ENCODE measurements at regions of chr7 and their contacts with region 1.

Region 1: DNA sequence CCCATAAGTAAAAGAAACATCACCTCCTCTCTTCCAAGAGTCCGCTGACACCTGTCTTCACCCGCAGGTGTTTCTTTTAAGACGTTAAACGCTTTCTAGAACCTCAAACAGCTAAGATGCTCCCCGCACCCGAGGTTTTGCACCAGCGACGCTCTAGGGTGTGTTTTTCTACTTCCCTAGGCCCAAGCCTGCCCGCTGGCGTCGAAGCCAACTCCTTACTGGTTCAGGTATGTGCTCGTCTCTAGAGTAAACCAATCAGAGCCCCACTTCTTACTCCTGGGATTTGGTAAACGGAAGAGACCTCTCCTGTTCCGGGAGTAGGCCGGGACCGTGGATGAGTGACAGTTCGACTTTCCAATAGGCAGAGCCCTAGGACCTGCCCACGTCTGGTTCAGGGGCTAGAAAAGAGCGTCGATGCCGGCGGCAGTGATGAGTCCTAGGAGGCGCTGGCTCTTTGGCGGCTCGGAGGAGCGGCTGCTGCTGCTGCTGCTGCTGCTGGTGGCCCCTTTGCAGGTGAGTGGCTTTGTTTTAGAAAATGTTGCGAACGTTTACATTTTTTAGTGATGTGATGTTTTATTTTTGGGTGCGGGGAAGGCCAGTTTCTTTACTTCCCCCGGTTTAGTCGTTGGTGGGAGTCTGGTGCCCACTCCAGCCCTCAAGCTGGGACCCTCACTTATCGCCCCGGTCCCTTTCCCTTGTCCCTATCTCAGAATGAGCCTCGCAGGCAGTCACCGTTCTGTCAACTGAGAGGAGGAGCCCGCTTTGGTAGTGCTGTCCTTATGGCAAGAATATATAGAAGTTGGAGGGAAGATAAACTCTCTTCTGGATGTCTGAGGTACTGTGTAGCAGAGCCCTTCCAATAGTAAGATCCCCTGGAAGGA is at the start of gene BPGM:
- DNase-seq: peak; percentile 81 to 100 (median 98)
- ATAC-seq: peak; percentile 97
- H3K4me3 ChIP-seq: peak within 1 kb of the TSS; percentile 88
- H3K4me3 Mint-ChIP-seq: no peak within 1 kb of the TSS
- H3K27ac ChIP-seq: peak within 1 kb of the TSS; percentile 85
- H3K27ac Mint-ChIP-seq: no peak within 1 kb of the TSS
- H3K4me1 ChIP-seq: peaks cover 19 to 35% of the 10 kb centered on the region in 2 donors
- H3K4me1 Mint-ChIP-seq: peaks cover 21 to 45% (median 38%) of the 10 kb centered on the region in 7 donors
- H3K27me3 ChIP-seq: no peaks in the 10 kb centered on the region
- H3K27me3 Mint-ChIP-seq: no peaks in the 10 kb centered on the region
- total RNA-seq, gene BPGM: 12.7 to 19.2 (median 14.2) TPM

Region 2: GRCh38 chr7:133252858-133253518 is 1393.7 kb before region 1 on chr7 and contains the start of gene EXOC4:
- CTCF ChIA-PET with region 1: no interaction called
- POLR2A ChIA-PET with region 1: no interaction called
- intact Hi-C with region 1: loop called (anchors 2 kb)
- DNase-seq: peak; percentile 66 to 97 (median 95)
- ATAC-seq: peak; percentile 100
- H3K4me3 ChIP-seq: peak within 1 kb of the TSS; percentile 87
- H3K4me3 Mint-ChIP-seq: peak within 1 kb of the TSS; percentile 85 to 99 (median 96)
- H3K27ac ChIP-seq: peak within 1 kb of the TSS; percentile 93
- H3K27ac Mint-ChIP-seq: peak within 1 kb of the TSS; percentile 94 to 98 (median 96)
- H3K4me1 ChIP-seq: peaks cover 4 to 7% of the 10 kb centered on the region in 2 donors
- H3K4me1 Mint-ChIP-seq: peaks cover 22 to 45% (median 40%) of the 10 kb centered on the region in 7 donors
- H3K27me3 ChIP-seq: no peaks in the 10 kb centered on the region
- H3K27me3 Mint-ChIP-seq: peaks cover 0 to 9% (median 0%) of the 10 kb centered on the region in 5 donors
- total RNA-seq, gene EXOC4: 65.4 to 106 (median 82.9) TPM

Region 3: GRCh38 chr7:134458806-134459698 is 187.6 kb before region 1 on chr7 and contains the start of gene AKR1B1:
- CTCF ChIA-PET with region 1: no interaction called
- POLR2A ChIA-PET with region 1: no interaction called
- intact Hi-C with region 1: loop called (anchors 1 kb)
- DNase-seq: peak; percentile 76 to 88 (median 84)
- ATAC-seq: peak; percentile 94
- H3K4me3 ChIP-seq: peak within 1 kb of the TSS; percentile 78
- H3K4me3 Mint-ChIP-seq: peak within 1 kb of the TSS; percentile 71 to 94 (median 89)
- H3K27ac ChIP-seq: peak within 1 kb of the TSS; percentile 72
- H3K27ac Mint-ChIP-seq: peak within 1 kb of the TSS; percentile 80 to 92 (median 84)
- H3K4me1 ChIP-seq: peaks cover 20 to 30% of the 10 kb centered on the region in 2 donors
- H3K4me1 Mint-ChIP-seq: peaks cover 30 to 55% (median 48%) of the 10 kb centered on the region in 7 donors
- H3K27me3 ChIP-seq: no peaks in the 10 kb centered on the region
- H3K27me3 Mint-ChIP-seq: no peaks in the 10 kb centered on the region
- total RNA-seq, gene AKR1B1: 62.2 to 108 (median 100) TPM

Region 4: GRCh38 chr7:134619627-134620331 is 26.9 kb before region 1 on chr7:
- CTCF ChIA-PET with region 1: no interaction called
- POLR2A ChIA-PET with region 1: no interaction called
- intact Hi-C with region 1: no loop called
- DNase-seq: no peak
- ATAC-seq: no peak
- H3K4me3 ChIP-seq: no peak overlapping the region
- H3K4me3 Mint-ChIP-seq: no peak overlapping the region
- H3K27ac ChIP-seq: no peak overlapping the region
- H3K27ac Mint-ChIP-seq: no peak overlapping the region
- H3K4me1 ChIP-seq: no peaks in the 10 kb centered on the region
- H3K4me1 Mint-ChIP-seq: no peaks in the 10 kb centered on the region
- H3K27me3 ChIP-seq: peaks cover 0 to 4% of the 10 kb centered on the region in 2 donors
- H3K27me3 Mint-ChIP-seq: peaks cover 12 to 40% (median 38%) of the 10 kb centered on the region in 5 donors

Region 5: DNA sequence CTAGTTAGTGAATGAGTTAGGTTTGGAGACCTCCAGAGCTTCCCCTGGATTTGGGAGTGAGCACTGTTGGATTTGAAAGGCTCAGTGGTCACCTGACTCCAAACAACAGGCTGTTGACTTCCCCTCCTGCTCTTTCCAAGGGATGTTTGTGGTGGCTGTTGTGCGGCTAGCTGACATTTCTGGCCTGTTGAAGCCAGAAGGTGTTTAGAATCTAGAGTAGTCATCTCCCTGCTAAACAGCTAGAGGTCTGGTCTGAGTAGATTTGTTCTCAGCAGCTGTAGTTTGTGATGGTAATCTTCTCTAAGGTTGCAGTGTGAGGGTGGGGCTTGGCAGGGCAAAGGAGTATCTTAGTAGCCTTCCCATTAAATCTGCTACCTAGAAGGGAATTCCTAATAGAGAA is 30.1 kb after region 1 on chr7:
- CTCF ChIA-PET with region 1: no interaction called
- POLR2A ChIA-PET with region 1: interaction called, 154 read pairs
- intact Hi-C with region 1: loop called in 1 of 2 experiments (anchors 5 kb)
- DNase-seq: no peak
- ATAC-seq: no peak
- H3K4me3 ChIP-seq: no peak overlapping the region
- H3K4me3 Mint-ChIP-seq: peak overlapping the region in 1 of 10 donors; percentile 5
- H3K27ac ChIP-seq: peak overlapping the region; percentile 17
- H3K27ac Mint-ChIP-seq: peak overlapping the region in 8 of 9 donors; percentile 39 to 96 (median 80)
- H3K4me1 ChIP-seq: peaks cover 0 to 12% of the 10 kb centered on the region in 2 donors
- H3K4me1 Mint-ChIP-seq: peaks cover 8 to 52% (median 46%) of the 10 kb centered on the region in 7 donors
- H3K27me3 ChIP-seq: no peaks in the 10 kb centered on the region
- H3K27me3 Mint-ChIP-seq: no peaks in the 10 kb centered on the region

Region 6: GRCh38 chr7:134750083-134751062 is 103.7 kb after region 1 on chr7:
- CTCF ChIA-PET with region 1: interaction called, 5 read pairs
- POLR2A ChIA-PET with region 1: interaction called, 3 read pairs
- intact Hi-C with region 1: loop called in 1 of 2 experiments (anchors 1 kb)
- DNase-seq: peak; percentile 26 to 68 (median 49)
- ATAC-seq: peak; percentile 87
- H3K4me3 ChIP-seq: no peak overlapping the region
- H3K4me3 Mint-ChIP-seq: no peak overlapping the region
- H3K27ac ChIP-seq: no peak overlapping the region
- H3K27ac Mint-ChIP-seq: no peak overlapping the region
- H3K4me1 ChIP-seq: no peaks in the 10 kb centered on the region
- H3K4me1 Mint-ChIP-seq: peaks cover 0 to 10% (median 0%) of the 10 kb centered on the region in 7 donors
- H3K27me3 ChIP-seq: no peaks in the 10 kb centered on the region
- H3K27me3 Mint-ChIP-seq: no peaks in the 10 kb centered on the region

Region 7: GRCh38 chr7:135170274-135170997 is 523.8 kb after region 1 on chr7 and contains the start of gene CYREN:
- CTCF ChIA-PET with region 1: interaction called, 3 read pairs
- POLR2A ChIA-PET with region 1: interaction called, 7 read pairs
- intact Hi-C with region 1: loop called (anchors 1 kb)
- DNase-seq: peak; percentile 74 to 91 (median 82)
- ATAC-seq: peak; percentile 85
- H3K4me3 ChIP-seq: peak within 1 kb of the TSS; percentile 84
- H3K4me3 Mint-ChIP-seq: peak within 1 kb of the TSS; percentile 84 to 96 (median 90)
- H3K27ac ChIP-seq: peak within 1 kb of the TSS; percentile 95
- H3K27ac Mint-ChIP-seq: peak within 1 kb of the TSS; percentile 94 to 98 (median 95)
- H3K4me1 ChIP-seq: peaks cover 16 to 29% of the 10 kb centered on the region in 2 donors
- H3K4me1 Mint-ChIP-seq: peaks cover 31 to 59% (median 47%) of the 10 kb centered on the region in 7 donors
- H3K27me3 ChIP-seq: no peaks in the 10 kb centered on the region
- H3K27me3 Mint-ChIP-seq: no peaks in the 10 kb centered on the region
- total RNA-seq, gene CYREN: 25.6 to 50.7 (median 32.0) TPM